Right cardiac atrium (tissue), 5 donors: ENCODE measurements at regions of chr10 and their contacts with region 1.

Region 1: DNA sequence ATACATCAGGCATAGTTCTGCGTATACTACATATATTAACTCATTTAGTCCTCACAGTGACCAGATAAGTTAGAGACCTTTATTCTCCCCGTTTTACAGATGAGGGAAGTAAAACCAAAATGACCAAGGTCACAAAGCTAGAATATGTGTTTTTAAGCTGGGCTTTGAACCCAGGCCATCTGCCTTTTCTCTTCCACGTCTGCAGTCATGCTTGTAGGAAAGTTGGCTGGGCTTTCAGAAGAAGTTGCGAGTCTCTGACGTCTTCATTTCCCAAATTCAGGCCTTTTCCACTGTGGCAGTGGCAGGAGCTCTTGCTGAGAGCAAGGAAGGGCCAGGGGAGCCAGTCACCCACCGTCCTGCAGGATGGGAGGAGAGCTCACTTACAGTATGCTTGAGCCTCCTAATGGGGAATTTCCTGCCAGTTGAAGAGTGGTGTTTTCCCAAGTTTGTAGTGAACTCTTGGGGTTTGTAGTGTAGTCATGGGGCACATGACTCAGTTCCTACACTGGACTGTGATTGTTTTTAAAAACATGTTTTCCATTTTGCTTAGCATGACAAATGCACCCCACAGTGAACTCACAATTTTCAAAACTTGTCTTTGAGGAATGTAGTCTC is 34.2 kb downstream of the CYP17A1 start:
- DNase-seq: peak; percentile 73 to 79 (median 73)
- ATAC-seq: peak; percentile 47 to 78
- H3K4me3 ChIP-seq: no peak overlapping the region
- H3K27ac ChIP-seq: peak overlapping the region; percentile 79
- H3K4me1 ChIP-seq: peaks cover 35% of the 10 kb centered on the region
- H3K27me3 ChIP-seq: no peaks in the 10 kb centered on the region

Region 2: GRCh38 chr10:102743588-102744373 is 59.2 kb before region 1 on chr10 and contains the start of gene WBP1L:
- intact Hi-C with region 1: loop called in 1 of 4 experiments (anchors 5 kb)
- DNase-seq: peak; percentile 96 to 98 (median 97)
- ATAC-seq: peak; percentile 96 to 98
- H3K4me3 ChIP-seq: peak within 1 kb of the TSS; percentile 84
- H3K27ac ChIP-seq: peak within 1 kb of the TSS; percentile 94
- H3K4me1 ChIP-seq: peaks cover 4% of the 10 kb centered on the region
- H3K27me3 ChIP-seq: no peaks in the 10 kb centered on the region
- total RNA-seq, gene WBP1L: 35.2 to 50.5 (median 37.8) TPM

Region 3: GRCh38 chr10:102752934-102753664 is 49.9 kb before region 1 on chr10:
- intact Hi-C with region 1: loop called in 1 of 4 experiments (anchors 10 kb)
- DNase-seq: peak in 1 of 3 donors; percentile 48
- ATAC-seq: peak; percentile 78 to 83
- H3K4me3 ChIP-seq: no peak overlapping the region
- H3K27ac ChIP-seq: peak overlapping the region; percentile 88
- H3K4me1 ChIP-seq: peaks cover 5% of the 10 kb centered on the region
- H3K27me3 ChIP-seq: no peaks in the 10 kb centered on the region

Region 4: GRCh38 chr10:102815790-102816549 is 12.9 kb after region 1 on chr10:
- intact Hi-C with region 1: loop called in 1 of 4 experiments (anchors 2 kb)
- DNase-seq: peak; percentile 56 to 76 (median 74)
- ATAC-seq: peak; percentile 74 to 77
- H3K4me3 ChIP-seq: no peak overlapping the region
- H3K27ac ChIP-seq: peak overlapping the region; percentile 100
- H3K4me1 ChIP-seq: peaks cover 26% of the 10 kb centered on the region
- H3K27me3 ChIP-seq: no peaks in the 10 kb centered on the region

Region 5: DNA sequence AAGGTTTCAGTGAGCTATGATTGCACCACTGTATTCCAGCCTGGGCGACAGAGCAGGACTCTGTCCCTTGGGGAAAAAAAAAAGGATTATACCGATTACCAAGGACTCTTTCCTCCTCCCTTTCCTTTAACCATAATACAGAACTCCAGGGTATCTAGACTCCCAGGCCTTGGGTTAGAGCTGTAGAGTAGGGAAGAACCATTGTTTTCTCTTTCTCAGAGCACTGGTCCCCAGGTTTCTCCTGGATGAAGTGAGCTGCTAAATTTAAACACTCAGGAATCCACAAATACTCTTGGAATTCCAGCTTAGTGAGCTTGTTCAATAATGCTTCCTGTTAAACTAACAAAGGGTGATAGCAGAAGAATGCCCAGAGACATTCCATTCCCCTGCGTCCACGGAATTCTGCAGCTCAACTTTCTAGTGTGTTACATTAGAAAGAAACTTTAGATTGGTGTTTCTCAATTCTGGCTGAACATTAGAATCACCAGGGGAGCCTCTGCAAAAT is 428.1 kb after region 1 on chr10:
- intact Hi-C with region 1: no loop called
- DNase-seq: no peak
- ATAC-seq: peak; percentile 61 to 85
- H3K4me3 ChIP-seq: no peak overlapping the region
- H3K27ac ChIP-seq: peak overlapping the region; percentile 90
- H3K4me1 ChIP-seq: no peaks in the 10 kb centered on the region
- H3K27me3 ChIP-seq: no peaks in the 10 kb centered on the region